ENCODE measurements at regions of chr9 and their contacts with region 1.

Region 1: DNA sequence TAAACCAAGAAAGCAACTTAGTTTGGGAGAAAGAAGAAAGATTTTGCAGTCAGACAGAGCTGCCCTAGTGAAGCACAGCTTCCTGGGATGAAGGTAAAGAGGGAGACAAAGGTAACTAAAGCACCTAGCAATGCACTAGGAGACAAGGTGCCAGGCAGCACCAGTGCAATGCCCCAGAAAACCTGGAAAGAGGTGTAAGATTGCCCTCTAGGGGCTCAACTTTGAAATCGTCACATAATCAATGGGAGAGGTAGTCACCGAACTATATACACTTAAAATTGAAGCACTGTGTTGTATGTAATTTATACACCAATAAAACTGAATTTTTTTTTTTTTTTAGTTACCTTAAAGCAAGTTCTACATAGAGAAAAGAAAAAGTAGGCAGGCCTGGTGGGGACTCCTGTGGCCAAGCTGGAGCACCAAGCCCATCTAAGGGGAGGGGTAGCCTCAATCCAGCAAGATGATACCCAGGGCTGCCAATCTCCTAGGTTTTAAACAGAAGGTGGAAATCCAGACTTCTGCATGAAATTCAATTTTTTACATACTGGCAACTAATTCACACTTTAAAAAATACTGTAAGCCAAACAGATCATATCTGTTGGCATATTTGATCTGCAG is 48.2 kb downstream of the CDK5RAP2 start:
- DNase-seq: peak in 1 of 2 experiments; percentile 52
- H3K4me3 ChIP-seq: no peak overlapping the region
- H3K27ac ChIP-seq: no peak overlapping the region
- H3K4me1 ChIP-seq: peaks cover 0 to 14% (median 10%) of the 10 kb centered on the region in 4 experiments; a peak in 6 of 7 replicates
- H3K27me3 ChIP-seq: no peaks in the 10 kb centered on the region
- CTCF ChIP-seq: peak; percentile 26 to 63 (median 56)
- EP300 ChIP-seq: no peak
- POLR2A ChIP-seq: no peak
- RAD21 ChIP-seq: peak; percentile 78 to 79

Region 2: GRCh38 chr9:120510816-120511215 is 21.0 kb before region 1 on chr9:
- CTCF ChIA-PET with region 1: interaction called, 11 read pairs
- POLR2A ChIA-PET with region 1: no interaction called
- DNase-seq: no peak
- H3K4me3 ChIP-seq: no peak overlapping the region
- H3K27ac ChIP-seq: no peak overlapping the region
- H3K4me1 ChIP-seq: no peaks in the 10 kb centered on the region
- H3K27me3 ChIP-seq: no peaks in the 10 kb centered on the region
- CTCF ChIP-seq: no peak
- EP300 ChIP-seq: no peak
- POLR2A ChIP-seq: no peak
- RAD21 ChIP-seq: no peak

Measured in H1 (cell line).